Activated CD4-positive, alpha-beta memory T cell treated with anti-CD3 and anti-CD28 coated beads for 36 hours (primary cell): ENCODE measurements at regions of chr1 and their contacts with region 1.

Region 1: DNA sequence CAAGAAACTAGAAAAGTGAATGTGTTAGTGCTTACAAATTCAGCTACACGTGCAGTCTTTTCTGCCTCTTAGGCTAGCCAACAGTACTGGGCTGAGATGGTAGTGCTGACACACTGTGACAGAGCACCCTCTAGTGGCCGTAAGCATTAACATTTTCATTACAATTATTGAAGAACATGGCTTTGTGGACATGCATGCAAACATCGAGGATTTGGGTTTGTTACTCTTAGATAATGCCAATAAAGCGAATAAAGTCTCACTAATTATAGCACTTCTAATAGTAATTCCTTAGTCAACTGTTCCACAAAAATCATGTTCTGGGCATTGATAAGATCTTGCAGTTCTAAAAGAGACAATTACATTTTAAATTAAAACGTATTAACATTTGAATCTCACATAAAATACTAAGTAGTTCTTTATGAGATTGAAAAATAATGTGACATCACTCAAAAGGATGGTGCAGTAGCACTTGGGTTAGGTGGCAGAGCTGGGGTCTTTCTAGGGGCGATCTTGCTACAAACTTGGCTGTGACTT is 47.1 kb downstream of the MYSM1 start:
- DNase-seq: peak; percentile 58
- H3K4me3 Mint-ChIP-seq: no peak overlapping the region
- H3K27ac Mint-ChIP-seq: no peak overlapping the region
- H3K4me1 Mint-ChIP-seq: peaks cover 11% of the 10 kb centered on the region
- H3K27me3 Mint-ChIP-seq: no peaks in the 10 kb centered on the region

Region 2: DNA sequence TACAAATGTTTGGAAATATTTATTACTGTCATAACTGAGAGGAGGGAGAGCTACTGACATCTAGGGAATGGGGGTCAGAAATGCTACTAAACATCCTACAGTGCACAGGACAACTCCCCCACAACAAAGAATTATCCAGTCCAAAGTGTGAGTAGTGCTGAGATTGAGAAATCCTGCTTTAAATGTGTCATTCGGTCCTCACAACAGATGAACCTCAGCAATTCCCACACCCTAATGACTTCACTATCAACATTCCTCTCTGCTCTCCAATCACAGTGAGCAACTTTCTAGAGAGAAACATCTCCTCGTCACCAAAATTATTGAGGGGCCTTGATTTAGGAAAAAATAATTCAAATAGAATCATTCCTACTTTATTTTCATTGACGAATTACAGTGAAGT is 124.2 kb before region 1 on chr1:
- CTCF ChIA-PET with region 1: interaction called, 13 read pairs
- POLR2A ChIA-PET with region 1: no interaction called
- intact Hi-C with region 1: no loop called
- DNase-seq: no peak
- H3K4me3 Mint-ChIP-seq: no peak overlapping the region
- H3K27ac Mint-ChIP-seq: no peak overlapping the region
- H3K4me1 Mint-ChIP-seq: peaks cover 19% of the 10 kb centered on the region
- H3K27me3 Mint-ChIP-seq: no peaks in the 10 kb centered on the region

Region 3: GRCh38 chr1:58573705-58574591 is 78.8 kb before region 1 on chr1:
- CTCF ChIA-PET with region 1: interaction called, 3 read pairs
- POLR2A ChIA-PET with region 1: no interaction called
- intact Hi-C with region 1: loop called (anchors 2 kb)
- DNase-seq: peak; percentile 78
- H3K4me3 Mint-ChIP-seq: no peak overlapping the region
- H3K27ac Mint-ChIP-seq: peak overlapping the region; percentile 43
- H3K4me1 Mint-ChIP-seq: peaks cover 40% of the 10 kb centered on the region
- H3K27me3 Mint-ChIP-seq: peaks cover 57% of the 10 kb centered on the region

Region 4: GRCh38 chr1:58584082-58584895 is 68.4 kb before region 1 on chr1:
- CTCF ChIA-PET with region 1: interaction called, 11 read pairs
- POLR2A ChIA-PET with region 1: no interaction called
- intact Hi-C with region 1: no loop called
- DNase-seq: no peak
- H3K4me3 Mint-ChIP-seq: no peak overlapping the region
- H3K27ac Mint-ChIP-seq: no peak overlapping the region
- H3K4me1 Mint-ChIP-seq: peaks cover 16% of the 10 kb centered on the region
- H3K27me3 Mint-ChIP-seq: peaks cover 50% of the 10 kb centered on the region

Region 5: GRCh38 chr1:58664881-58665280 is 12.2 kb after region 1 on chr1:
- CTCF ChIA-PET with region 1: interaction called, 13 read pairs
- POLR2A ChIA-PET with region 1: no interaction called
- intact Hi-C with region 1: no loop called
- DNase-seq: no peak
- H3K4me3 Mint-ChIP-seq: no peak overlapping the region
- H3K27ac Mint-ChIP-seq: no peak overlapping the region
- H3K4me1 Mint-ChIP-seq: no peaks in the 10 kb centered on the region
- H3K27me3 Mint-ChIP-seq: no peaks in the 10 kb centered on the region